ENCODE measurements at regions of chr7 and their contacts with region 1.

Region 1: DNA sequence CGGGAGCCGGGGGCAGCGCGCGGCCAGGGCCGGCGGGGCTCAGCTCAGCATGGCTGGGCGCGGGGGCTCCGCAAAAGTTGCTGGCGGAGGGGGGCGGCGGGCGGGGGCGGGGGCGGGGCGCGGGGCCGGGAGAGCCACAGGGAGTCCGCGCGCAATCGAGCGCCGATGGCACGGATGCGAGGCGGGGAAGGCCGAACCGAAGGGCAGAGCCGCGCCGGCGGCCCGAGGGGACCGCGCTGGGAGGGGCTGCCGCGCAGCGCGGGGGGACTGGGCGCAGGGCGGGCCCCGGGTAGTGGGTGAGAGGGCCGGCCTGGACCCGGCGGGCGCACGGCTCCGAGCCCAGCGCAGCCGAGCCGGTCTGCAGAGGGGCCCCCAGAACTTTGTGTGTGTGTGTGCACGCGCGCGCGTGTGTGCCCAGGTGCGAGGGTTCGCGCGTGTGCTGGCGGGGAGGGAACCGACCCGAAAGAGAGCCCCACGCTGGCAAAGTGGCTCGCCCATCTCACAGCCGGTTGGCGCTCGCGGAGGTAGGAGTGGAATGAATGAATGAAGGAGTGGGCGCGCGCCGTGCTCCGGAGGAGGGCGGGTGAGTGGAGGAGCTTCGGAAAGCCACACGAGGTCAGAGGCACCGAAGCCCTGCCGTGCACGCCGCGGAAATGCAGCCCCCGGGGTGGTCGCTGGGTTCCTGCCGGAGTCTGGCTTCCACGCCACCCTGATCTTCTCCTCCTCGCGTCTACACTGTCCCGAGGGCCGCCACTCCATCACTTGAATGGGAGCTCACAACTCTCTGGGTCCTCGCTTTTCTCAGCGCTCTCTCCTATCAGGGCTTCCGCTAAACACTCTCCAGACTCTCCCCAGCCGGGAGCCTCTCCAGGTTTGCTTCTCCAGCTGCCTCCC is at the start of gene HIPK2:
- DNase-seq: peak; percentile 40 to 84 (median 72)
- ATAC-seq: peak; percentile 60
- H3K4me3 ChIP-seq: peak within 1 kb of the TSS; percentile 73
- H3K4me3 Mint-ChIP-seq: peak within 1 kb of the TSS; percentile 98
- H3K27ac ChIP-seq: peak within 1 kb of the TSS; percentile 62 to 70
- H3K27ac Mint-ChIP-seq: peak within 1 kb of the TSS; percentile 96
- H3K4me1 ChIP-seq: peaks cover 35% of the 10 kb centered on the region
- H3K4me1 Mint-ChIP-seq: peaks cover 45% of the 10 kb centered on the region
- H3K27me3 ChIP-seq: no peaks in the 10 kb centered on the region
- H3K27me3 Mint-ChIP-seq: peaks cover 5% of the 10 kb centered on the region
- CTCF ChIP-seq: no peak
- total RNA-seq, gene HIPK2: 19.8 to 21.3 TPM

Region 2: GRCh38 chr7:139557857-139558581 is 220.2 kb before region 1 on chr7:
- CTCF ChIA-PET with region 1: no interaction called
- POLR2A ChIA-PET with region 1: no interaction called
- intact Hi-C with region 1: no loop called
- DNase-seq: no peak
- ATAC-seq: no peak
- H3K4me3 ChIP-seq: no peak overlapping the region
- H3K4me3 Mint-ChIP-seq: no peak overlapping the region
- H3K27ac ChIP-seq: no peak overlapping the region
- H3K27ac Mint-ChIP-seq: no peak overlapping the region
- H3K4me1 ChIP-seq: no peaks in the 10 kb centered on the region
- H3K4me1 Mint-ChIP-seq: peaks cover 2% of the 10 kb centered on the region
- H3K27me3 ChIP-seq: no peaks in the 10 kb centered on the region
- H3K27me3 Mint-ChIP-seq: peaks cover 11% of the 10 kb centered on the region
- CTCF ChIP-seq: no peak

Region 3: DNA sequence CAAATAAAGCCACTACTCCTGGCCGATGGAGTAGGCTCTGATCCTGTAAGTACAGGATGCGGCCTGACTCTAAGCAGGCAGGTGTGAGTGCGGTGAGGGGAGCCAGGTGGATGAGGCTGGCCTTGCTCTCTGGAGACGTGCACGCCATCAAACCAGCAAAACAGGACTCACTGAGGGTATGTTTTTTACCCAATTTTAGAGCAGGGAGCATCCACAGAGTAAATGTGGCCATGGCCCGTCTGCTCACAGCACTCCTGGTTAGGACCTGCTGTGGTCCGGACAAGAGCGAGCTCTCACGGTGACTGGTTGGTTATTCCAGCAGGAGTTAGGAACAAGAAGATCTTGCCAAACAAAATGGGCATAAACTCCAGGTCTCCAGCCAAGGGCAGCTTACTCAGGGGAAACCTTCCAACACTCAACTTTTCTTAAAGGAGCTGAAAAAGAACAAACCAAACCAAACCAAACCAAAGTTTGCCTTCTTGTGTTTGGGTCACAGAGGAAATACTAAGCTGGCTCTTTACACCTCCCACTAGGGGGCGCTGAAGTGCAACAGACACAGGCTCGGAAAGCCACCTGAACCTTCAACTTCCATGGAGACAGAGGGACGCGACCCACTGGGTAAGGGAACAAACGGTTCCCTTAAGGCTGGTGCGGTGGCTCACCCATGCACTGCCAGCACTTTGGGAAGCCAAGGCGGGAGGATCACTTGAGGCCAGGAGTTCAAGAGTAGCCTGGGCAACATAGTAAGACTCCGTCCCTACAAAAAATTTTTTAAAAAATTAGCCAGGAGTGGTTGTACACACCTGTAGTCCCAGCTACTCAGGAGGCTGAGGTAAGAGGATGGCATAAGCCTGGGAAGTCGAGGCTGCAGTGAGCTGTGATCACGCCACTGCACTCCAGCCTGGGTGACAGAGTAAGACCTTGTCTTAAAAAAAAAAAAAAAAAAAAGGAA is 132.3 kb before region 1 on chr7:
- CTCF ChIA-PET with region 1: interaction called, 10 read pairs
- POLR2A ChIA-PET with region 1: interaction called, 4 read pairs
- intact Hi-C with region 1: loop called (anchors 5 kb)
- DNase-seq: peak; percentile 64 to 90 (median 84)
- ATAC-seq: peak; percentile 52
- H3K4me3 ChIP-seq: no peak overlapping the region
- H3K4me3 Mint-ChIP-seq: no peak overlapping the region
- H3K27ac ChIP-seq: no peak overlapping the region
- H3K27ac Mint-ChIP-seq: peak overlapping the region; percentile 79
- H3K4me1 ChIP-seq: peaks cover 55% of the 10 kb centered on the region
- H3K4me1 Mint-ChIP-seq: peaks cover 76% of the 10 kb centered on the region
- H3K27me3 ChIP-seq: no peaks in the 10 kb centered on the region
- H3K27me3 Mint-ChIP-seq: no peaks in the 10 kb centered on the region
- CTCF ChIP-seq: peak; percentile 82

Region 4: DNA sequence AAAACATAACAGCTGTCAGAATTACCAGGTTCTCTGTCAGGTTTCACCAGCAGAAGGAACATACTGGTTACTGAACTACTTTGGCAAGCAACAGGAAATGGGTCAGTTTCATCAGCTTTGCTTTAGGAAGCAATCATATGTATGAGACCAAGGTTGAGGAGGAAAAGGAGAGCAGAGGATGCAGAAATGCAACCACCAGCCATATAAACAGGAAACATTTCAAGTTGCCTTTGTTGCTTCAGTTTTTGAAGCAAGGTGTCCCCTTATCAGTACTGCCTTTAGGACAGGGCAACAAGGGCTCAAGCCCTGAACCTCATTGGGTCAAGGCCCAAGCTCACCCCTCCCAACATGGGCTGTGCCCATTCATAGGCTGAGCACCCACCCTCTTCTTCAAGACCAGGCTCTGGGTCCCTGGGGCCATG is 10.6 kb before region 1 on chr7:
- CTCF ChIA-PET with region 1: interaction called, 4 read pairs
- POLR2A ChIA-PET with region 1: interaction called, 18 read pairs
- intact Hi-C with region 1: loop called in 1 of 2 experiments (anchors 1 kb)
- DNase-seq: peak in 3 of 9 experiments; percentile 36 to 55 (median 55)
- ATAC-seq: peak; percentile 74
- H3K4me3 ChIP-seq: peak overlapping the region in 1 of 2 experiments; percentile 26
- H3K4me3 Mint-ChIP-seq: peak overlapping the region; percentile 59
- H3K27ac ChIP-seq: peak overlapping the region; percentile 59 to 74
- H3K27ac Mint-ChIP-seq: peak overlapping the region; percentile 91
- H3K4me1 ChIP-seq: peaks cover 33% of the 10 kb centered on the region
- H3K4me1 Mint-ChIP-seq: peaks cover 86% of the 10 kb centered on the region
- H3K27me3 ChIP-seq: no peaks in the 10 kb centered on the region
- H3K27me3 Mint-ChIP-seq: no peaks in the 10 kb centered on the region
- CTCF ChIP-seq: no peak

Region 5: DNA sequence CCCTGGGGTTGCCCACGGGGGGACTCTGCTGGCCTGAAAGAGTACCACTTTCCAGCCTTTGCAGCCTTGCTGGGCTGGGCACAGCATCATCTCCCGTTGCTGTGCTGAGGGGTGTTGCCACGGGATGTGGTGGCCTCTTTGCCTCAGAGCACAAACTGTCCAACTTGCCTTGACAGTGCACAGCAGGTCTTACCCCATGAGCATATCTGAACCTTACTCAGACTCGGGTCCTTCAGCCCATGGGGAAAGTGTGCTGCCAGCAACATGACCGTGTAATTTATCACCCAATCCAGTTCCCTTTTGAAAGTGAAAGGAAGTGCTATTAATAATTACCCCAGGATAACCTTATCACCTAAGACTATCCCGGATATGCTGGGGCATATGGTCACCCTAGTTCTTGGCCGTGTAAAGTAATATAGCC is 97.6 kb after region 1 on chr7:
- CTCF ChIA-PET with region 1: no interaction called
- POLR2A ChIA-PET with region 1: no interaction called
- intact Hi-C with region 1: no loop called
- DNase-seq: peak in 2 of 9 experiments; percentile 9 to 29
- ATAC-seq: no peak
- H3K4me3 ChIP-seq: no peak overlapping the region
- H3K4me3 Mint-ChIP-seq: no peak overlapping the region
- H3K27ac ChIP-seq: peak overlapping the region in 1 of 2 experiments; percentile 4
- H3K27ac Mint-ChIP-seq: no peak overlapping the region
- H3K4me1 ChIP-seq: no peaks in the 10 kb centered on the region
- H3K4me1 Mint-ChIP-seq: no peaks in the 10 kb centered on the region
- H3K27me3 ChIP-seq: no peaks in the 10 kb centered on the region
- H3K27me3 Mint-ChIP-seq: no peaks in the 10 kb centered on the region
- CTCF ChIP-seq: no peak

Region 6: GRCh38 chr7:140003913-140004382 is 225.8 kb after region 1 on chr7:
- CTCF ChIA-PET with region 1: interaction called, 4 read pairs
- POLR2A ChIA-PET with region 1: no interaction called
- intact Hi-C with region 1: loop called (anchors 5 kb)
- DNase-seq: peak in 4 of 9 experiments; percentile 4 to 50 (median 31)
- ATAC-seq: no peak
- H3K4me3 ChIP-seq: no peak overlapping the region
- H3K4me3 Mint-ChIP-seq: no peak overlapping the region
- H3K27ac ChIP-seq: no peak overlapping the region
- H3K27ac Mint-ChIP-seq: no peak overlapping the region
- H3K4me1 ChIP-seq: no peaks in the 10 kb centered on the region
- H3K4me1 Mint-ChIP-seq: no peaks in the 10 kb centered on the region
- H3K27me3 ChIP-seq: no peaks in the 10 kb centered on the region
- H3K27me3 Mint-ChIP-seq: no peaks in the 10 kb centered on the region
- CTCF ChIP-seq: peak; percentile 49

Region 7: DNA sequence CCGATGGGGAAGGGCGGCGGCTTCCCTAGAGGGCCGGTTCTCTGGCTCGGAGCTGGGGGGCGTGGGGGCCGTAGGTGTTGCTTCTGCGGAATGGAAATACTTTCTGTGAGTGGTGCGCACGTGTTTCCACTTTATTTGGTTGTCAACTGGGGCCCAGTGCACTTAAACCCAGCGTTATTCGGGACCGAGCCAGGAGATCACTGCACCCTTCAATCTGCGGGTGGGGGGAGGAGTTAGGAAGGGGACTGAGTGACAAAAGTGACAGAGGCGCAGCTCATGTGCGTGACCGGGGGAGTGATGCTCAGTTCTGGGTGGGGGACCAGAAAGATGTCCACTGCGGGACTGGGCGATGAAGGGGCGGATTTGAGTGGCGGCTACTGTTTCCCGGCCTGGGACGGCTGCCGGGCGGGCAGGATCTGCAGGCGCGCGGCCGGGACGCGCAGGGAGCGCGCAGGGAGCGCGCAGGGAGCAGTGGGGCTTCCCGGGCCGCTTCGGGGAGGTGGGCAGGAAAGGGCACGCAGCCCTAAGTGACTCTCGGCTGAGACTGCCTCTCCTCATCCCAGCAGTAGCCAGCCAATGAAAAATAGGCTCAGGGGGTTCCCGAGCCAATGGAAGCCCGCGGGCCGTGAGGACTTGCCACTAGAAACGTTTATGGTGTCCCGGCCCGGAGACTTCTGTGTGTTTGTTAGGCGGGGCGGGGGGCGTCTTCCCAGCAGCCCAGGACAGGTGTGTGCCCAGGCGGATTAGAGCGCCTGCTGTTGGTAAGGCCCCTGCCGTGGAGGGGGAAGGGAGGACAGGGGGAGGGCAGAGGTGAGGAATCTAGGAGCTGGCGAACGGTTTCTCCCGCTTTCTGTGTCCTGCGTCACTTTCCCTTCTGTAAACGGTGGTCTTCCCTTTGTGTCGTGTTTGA is 452.9 kb after region 1 on chr7:
- CTCF ChIA-PET with region 1: no interaction called
- POLR2A ChIA-PET with region 1: no interaction called
- intact Hi-C with region 1: loop called in 1 of 2 experiments (anchors 2 kb)
- DNase-seq: peak in 8 of 9 experiments; percentile 25 to 80 (median 62)
- ATAC-seq: peak; percentile 19
- H3K4me3 ChIP-seq: peak overlapping the region; percentile 73
- H3K4me3 Mint-ChIP-seq: peak overlapping the region; percentile 92
- H3K27ac ChIP-seq: peak overlapping the region; percentile 83 to 85
- H3K27ac Mint-ChIP-seq: peak overlapping the region; percentile 100
- H3K4me1 ChIP-seq: peaks cover 25% of the 10 kb centered on the region
- H3K4me1 Mint-ChIP-seq: peaks cover 40% of the 10 kb centered on the region
- H3K27me3 ChIP-seq: no peaks in the 10 kb centered on the region
- H3K27me3 Mint-ChIP-seq: no peaks in the 10 kb centered on the region
- CTCF ChIP-seq: no peak

Region 8: DNA sequence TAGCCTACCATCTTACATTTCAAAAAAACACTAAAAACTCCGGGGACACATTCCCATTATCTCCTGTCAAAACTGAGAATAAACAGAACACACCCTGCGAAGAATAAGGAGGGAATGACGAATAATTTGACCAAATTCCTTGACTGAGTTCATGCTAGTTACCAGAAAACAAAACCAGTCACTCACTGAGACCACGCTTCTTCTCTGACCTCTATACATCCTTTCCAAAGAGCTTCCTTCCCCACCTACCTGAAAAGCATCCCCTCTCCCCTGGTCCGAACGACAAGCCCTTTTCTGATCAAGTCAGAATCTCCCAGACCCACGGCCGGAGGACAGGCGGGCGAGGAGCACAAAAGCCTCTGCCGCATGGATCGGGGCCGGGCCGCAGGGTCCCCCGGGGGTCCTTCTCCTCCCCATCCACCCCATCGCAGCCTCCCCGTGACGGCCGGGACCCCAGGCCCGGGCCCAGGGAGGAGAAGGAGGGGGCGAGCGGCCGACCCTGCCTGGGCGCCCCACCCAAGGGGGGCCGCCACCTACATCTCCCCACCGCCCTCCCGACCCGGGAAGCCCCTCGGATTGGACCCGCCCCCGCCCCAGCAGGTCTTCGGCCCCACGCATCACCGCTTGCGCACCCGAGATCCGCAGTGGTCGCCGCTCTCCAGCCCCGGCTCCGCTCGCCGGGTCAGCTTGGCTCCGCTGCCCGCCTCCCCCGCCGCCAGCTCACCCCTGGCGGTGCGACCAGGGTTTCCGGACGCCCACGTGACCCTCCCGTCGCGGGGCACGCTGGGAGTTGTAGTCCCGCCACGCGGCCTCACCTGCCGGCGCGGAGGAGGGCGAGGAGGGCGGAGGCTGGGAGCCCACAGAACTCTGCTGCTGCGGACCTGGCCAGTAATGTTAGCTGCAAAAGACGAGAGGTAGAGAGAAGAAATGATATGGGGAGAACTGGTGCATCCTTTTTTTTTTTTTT is 619.9 kb after region 1 on chr7 and contains the start of gene SLC37A3:
- CTCF ChIA-PET with region 1: no interaction called
- POLR2A ChIA-PET with region 1: no interaction called
- intact Hi-C with region 1: loop called in 1 of 2 experiments (anchors 5 kb)
- DNase-seq: peak; percentile 70 to 91 (median 87)
- ATAC-seq: peak; percentile 96
- H3K4me3 ChIP-seq: peak within 1 kb of the TSS; percentile 77 to 84
- H3K4me3 Mint-ChIP-seq: peak within 1 kb of the TSS; percentile 90
- H3K27ac ChIP-seq: peak within 1 kb of the TSS; percentile 48 to 59
- H3K27ac Mint-ChIP-seq: peak within 1 kb of the TSS; percentile 81
- H3K4me1 ChIP-seq: peaks cover 14% of the 10 kb centered on the region
- H3K4me1 Mint-ChIP-seq: peaks cover 28% of the 10 kb centered on the region
- H3K27me3 ChIP-seq: no peaks in the 10 kb centered on the region
- H3K27me3 Mint-ChIP-seq: no peaks in the 10 kb centered on the region
- CTCF ChIP-seq: peak; percentile 25
- total RNA-seq, gene SLC37A3: 28.4 to 32.1 TPM

Measured in CD8-positive, alpha-beta T cell (primary cell).